OCI-LY7 (cell line): ENCODE measurements at regions of chr2 and their contacts with region 1.

Region 1: DNA sequence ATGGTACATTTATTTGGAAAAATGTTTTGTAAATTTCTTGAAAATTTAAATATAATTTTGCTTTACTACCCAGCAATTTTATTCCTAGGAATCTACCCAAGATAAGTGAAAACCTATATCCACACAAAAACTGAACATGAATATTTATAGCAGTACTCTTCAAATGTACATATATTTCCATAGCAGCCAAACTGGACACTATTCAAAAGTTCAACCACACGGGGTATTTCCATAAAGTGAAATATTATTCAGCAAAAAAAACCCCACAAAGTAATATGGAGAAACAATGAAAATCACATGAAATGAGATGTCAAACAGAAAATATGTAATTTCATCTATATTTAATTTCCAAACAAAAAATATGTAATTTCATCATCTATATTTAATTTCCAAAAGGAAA is 1247.6 kb upstream of the TMEFF2 start:
- DNase-seq: no peak
- H3K4me3 ChIP-seq: no peak overlapping the region
- H3K27ac ChIP-seq: no peak overlapping the region
- H3K4me1 ChIP-seq: no peaks in the 10 kb centered on the region
- CTCF ChIP-seq: no peak

Region 2: DNA sequence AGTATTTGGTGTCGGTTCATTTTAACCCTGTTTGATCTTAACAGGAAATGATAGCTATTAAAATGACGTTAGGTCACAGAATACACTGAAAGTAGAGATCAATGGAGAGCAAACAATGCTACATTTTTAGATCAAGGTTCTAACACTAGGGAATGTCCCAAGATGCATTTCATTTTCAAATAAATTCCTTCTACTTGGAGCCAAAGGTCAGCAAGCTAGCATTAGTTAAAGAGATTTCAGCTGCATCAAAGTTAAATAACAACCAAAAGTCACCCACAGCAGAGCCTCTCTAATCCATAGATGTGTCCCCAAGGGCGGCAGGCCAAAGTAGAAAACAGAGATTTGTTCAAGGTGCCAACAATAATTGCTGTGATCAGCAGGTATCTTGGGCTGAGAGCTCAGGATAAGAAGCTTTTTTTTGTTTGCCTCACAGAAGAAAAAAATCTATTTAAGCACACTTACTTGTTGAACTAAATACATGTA is 13.9 kb before region 1 on chr2:
- CTCF ChIA-PET with region 1: no interaction called
- POLR2A ChIA-PET with region 1: interaction called, 11 read pairs
- intact Hi-C with region 1: no loop called
- DNase-seq: no peak
- H3K4me3 ChIP-seq: no peak overlapping the region
- H3K27ac ChIP-seq: no peak overlapping the region
- H3K4me1 ChIP-seq: no peaks in the 10 kb centered on the region
- CTCF ChIP-seq: no peak